ENCODE measurements at regions of chr3 and their contacts with region 1.

Region 1: DNA sequence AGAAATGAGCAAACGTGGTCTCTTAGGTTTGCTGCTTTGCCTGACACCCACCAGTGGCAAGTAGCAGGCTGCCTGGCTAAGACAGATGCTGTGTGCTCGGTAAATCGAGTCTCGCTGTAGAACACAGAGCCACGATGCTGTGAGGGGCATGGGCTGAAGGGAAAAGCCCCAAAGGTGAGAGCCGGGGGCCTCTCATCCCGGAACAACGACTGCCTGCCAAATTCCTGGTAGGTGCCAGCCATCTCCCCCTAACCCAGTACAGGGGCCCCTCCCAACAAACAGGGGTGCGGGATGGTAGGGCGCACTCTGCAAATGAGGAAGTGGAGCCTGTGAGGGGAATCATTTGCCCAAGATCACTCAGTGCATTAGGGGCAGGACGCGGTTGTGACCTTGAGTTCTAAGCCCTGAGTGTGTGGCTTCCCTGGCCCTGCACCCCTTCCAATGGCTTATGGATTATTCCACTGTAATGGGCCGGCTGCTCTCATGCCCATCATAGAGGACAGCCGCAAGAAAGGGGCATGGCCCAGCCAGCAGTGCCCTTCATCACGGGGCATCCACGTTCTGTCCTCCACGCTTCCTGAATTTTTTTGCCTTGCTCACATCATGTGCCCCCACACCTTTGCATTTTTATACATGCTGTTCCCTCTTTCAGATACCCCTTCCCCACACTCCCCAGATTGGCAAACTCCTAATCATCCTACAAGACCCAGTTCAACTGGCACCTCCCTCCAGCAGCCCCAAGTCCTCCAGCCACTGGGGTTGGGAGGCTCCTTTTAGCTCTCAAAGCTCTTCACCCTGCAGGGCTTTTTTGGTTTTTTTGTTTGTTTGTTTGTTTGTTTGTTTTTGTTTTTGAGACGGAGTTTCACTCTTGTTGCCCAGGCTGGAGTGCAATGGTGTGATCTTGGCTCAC is 125.4 kb downstream of the NUP210 start:
- H3K4me3 ChIP-seq: no peak overlapping the region
- H3K27ac ChIP-seq: no peak overlapping the region
- H3K4me1 ChIP-seq: no peaks in the 10 kb centered on the region
- CTCF ChIP-seq: no peak

Region 2: DNA sequence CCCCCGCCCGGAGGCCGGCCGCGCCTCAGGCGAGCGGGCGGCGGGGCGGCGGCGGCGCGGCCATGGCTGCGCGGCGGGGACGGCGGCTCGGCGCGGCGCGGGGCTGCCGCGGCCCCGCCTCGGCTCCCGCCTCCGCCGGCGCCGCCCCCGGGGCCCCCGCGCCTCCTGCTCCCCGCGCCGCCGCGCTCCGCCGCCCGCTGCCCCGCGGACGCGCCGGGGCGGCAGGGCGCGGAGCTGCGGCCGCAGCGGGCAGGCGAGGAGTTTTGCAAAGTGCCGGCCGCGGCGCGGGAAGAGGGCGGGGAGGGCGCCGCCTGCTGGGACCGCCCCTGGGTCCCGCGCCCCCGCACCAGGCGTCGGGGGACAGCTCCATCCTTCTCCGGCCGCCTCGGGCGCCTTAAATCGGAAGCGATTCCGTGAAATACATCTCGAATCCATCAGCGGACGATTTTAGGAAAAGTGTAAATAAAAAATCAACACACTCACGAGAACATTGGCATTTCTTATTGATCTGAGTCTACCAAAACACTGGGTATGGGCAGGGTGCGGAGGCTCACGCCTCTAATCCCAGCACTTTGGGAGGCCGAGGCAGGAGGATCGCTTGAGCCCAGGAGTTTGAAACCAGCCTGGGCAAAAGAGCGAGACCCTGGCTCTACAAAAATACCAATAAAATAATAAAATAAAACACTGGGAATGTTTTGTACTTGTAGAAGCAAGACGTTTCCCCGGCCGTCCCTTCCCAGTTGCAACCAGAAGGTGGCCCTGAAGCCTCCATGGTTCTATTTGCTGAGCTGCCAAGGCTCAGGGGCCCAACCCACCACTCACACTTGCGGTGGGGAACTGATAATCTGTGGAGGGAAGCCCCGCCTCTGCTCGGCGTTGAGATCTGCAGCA is 11.5 kb before region 1 on chr3:
- CTCF ChIA-PET with region 1: interaction called, 11 read pairs
- POLR2A ChIA-PET with region 1: no interaction called
- H3K4me3 ChIP-seq: peak overlapping the region; percentile 50
- H3K27ac ChIP-seq: peak overlapping the region; percentile 33; the same call in 1 of the 2 replicates
- H3K4me1 ChIP-seq: peaks cover 7% of the 10 kb centered on the region
- CTCF ChIP-seq: peak; percentile 46